IMR-90 (cell line): ENCODE measurements at regions of chr10 and their contacts with region 1.

Region 1: DNA sequence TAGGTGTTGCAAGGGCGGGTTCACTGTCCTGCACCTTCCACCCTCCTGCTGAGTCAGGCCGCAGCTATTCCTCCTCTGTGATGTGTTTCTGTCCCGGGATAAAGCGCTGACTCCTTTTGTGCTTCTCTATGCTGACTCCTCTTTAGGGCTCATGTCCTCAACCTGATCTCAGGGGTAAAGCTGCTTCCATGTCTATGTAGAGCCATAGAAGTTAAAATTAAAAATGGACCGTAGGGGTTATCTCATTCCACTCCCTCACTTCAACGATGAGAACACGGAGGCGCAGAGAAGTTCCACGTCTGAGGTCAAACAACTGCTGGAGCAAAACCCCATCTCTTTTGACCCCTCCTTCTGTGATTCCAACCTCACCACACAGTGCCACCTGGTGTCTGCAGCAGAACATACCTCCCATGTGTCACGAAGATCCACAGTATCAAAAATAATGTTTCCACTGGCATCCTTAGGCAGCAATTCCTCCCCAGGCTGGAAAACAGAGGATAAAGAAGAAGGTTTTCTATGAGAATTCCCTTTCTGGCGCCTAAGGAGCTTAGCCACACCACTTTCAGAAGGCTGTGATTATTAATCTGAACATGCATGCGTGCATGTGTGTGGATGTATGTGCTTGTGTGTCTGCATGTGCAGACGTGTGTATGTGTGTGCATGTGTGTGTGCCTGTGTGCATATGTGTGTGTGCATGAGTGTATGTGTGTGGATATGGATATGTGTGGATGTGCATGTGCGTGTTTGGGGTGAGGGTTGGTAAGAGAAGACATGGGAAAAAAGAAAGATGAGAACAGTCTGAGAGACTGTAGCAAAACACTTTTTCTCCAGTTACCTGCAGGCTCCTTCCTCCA is 81.2 kb upstream of the UCN3 start:
- DNase-seq: peak; percentile 47
- ATAC-seq: peak; percentile 95
- H3K4me3 ChIP-seq: no peak overlapping the region
- H3K27ac ChIP-seq: no peak overlapping the region
- H3K4me1 ChIP-seq: 0 out of 2 replicates have a peak, but pooled peaks cover 1% of the 10 kb centered on the region
- H3K27me3 ChIP-seq: no peaks in the 10 kb centered on the region; the same call in none of the 2 replicates
- CTCF ChIP-seq: peak; percentile 60
- POLR2A ChIP-seq: no peak
- RAD21 ChIP-seq: peak; percentile 60

Region 2: GRCh38 chr10:5018134-5018533 is 265.4 kb before region 1 on chr10:
- CTCF ChIA-PET with region 1: no interaction called
- POLR2A ChIA-PET with region 1: no interaction called
- dilution Hi-C with region 1: no loop called
- in situ Hi-C with region 1: no loop called
- intact Hi-C with region 1: loop called (anchors 2 kb)
- DNase-seq: no peak
- ATAC-seq: 0 out of 2 replicates have a peak, but pooled peaks have one; percentile 4
- H3K4me3 ChIP-seq: no peak overlapping the region
- H3K27ac ChIP-seq: no peak overlapping the region
- H3K4me1 ChIP-seq: peaks cover 3% of the 10 kb centered on the region; the same call in 1 of the 2 replicates
- H3K27me3 ChIP-seq: no peaks in the 10 kb centered on the region
- CTCF ChIP-seq: no peak
- POLR2A ChIP-seq: no peak
- RAD21 ChIP-seq: no peak

Region 3: GRCh38 chr10:5466418-5467154 is 183.1 kb after region 1 on chr10:
- CTCF ChIA-PET with region 1: no interaction called
- POLR2A ChIA-PET with region 1: no interaction called
- dilution Hi-C with region 1: no loop called
- in situ Hi-C with region 1: no loop called
- intact Hi-C with region 1: no loop called
- DNase-seq: peak; percentile 82
- ATAC-seq: peak; percentile 92
- H3K4me3 ChIP-seq: no peak overlapping the region
- H3K27ac ChIP-seq: peak overlapping the region; percentile 19; the same call in 1 of the 2 replicates
- H3K4me1 ChIP-seq: peaks cover 16% of the 10 kb centered on the region
- H3K27me3 ChIP-seq: no peaks in the 10 kb centered on the region
- CTCF ChIP-seq: no peak
- POLR2A ChIP-seq: no peak
- RAD21 ChIP-seq: no peak